ENCODE measurements at regions of chr11 and their contacts with region 1.

Region 1: DNA sequence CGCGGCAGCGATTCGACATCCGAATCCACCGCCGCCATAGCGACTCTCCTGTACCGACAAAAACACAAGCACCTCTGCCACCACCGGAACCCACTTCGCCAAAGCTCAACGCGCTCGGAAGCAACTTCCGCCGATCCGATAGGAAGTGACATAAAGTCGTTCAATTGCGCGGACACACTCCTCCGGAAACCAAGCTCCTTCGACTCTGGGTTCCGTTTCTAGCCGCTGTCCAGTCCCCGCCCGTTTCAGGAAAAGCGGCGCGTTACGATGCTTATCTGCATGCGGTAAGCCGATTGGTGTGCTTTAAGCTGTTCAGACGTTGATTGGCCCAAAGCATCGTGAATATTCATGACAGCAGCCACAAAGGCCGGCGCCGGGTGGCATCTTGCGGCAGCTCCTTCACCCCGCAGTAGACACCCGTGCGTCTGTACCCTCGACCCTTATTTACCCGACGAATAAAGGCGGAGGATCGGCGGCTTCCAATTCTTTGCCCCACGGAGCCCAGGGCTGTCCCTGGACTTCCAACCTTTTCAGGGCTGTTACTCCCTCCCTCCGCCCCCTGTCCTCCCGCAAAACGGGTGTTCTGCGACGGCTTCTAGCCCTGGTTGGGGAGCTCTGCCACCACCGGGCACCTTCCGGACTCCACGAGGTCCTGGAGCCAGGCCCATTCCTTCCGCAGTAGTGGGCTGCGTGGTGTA is at the start of gene TUT1:
- DNase-seq: peak; percentile 97
- H3K4me3 Mint-ChIP-seq: peak within 1 kb of the TSS; percentile 94
- H3K27ac Mint-ChIP-seq: peak within 1 kb of the TSS; percentile 93
- H3K4me1 Mint-ChIP-seq: peaks cover 28% of the 10 kb centered on the region
- H3K27me3 Mint-ChIP-seq: no peaks in the 10 kb centered on the region
- total RNA-seq, gene TUT1: 29.9 and 41.7 TPM in 2 replicates

Region 2: DNA sequence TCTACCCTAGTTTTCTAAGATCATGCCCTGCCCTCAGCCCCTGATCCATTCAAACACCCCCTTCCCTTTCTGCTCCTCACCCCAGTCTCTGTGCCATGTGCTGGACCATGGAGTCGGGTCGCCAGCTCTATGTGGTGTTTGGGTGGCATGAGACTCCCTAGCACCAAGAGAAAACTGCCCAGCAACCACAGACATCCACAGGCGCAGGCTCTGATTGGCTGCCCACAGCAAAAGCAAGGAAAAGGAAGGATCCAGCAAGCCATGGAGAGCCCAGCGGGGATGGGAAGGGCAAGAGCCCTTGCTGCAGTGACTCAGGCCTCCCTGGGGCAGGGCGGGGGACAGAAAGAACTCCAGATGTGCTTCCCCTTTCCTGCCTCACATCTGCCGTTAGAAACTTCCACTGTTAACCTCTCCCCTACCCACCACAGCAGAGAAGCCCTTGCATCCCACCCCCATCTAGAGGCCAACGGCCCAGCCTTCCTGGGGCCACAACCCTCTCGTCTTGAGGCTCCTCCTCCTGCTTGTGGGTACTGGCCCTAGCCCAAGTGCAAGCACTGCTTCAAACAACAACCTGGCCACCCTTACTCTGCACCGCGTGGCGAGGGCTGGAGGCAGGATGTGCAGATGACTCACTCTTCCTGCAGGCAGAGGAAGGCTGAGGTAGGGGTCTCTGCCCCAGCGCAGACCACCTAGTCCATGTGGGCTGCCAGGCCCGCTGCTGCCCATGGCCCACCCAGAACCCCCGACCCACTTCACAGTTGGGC is 35.3 kb before region 1 on chr11:
- intact Hi-C with region 1: loop called (anchors 1 kb)
- DNase-seq: peak; percentile 87
- H3K4me3 Mint-ChIP-seq: peak overlapping the region; percentile 56
- H3K27ac Mint-ChIP-seq: peak overlapping the region; percentile 97
- H3K4me1 Mint-ChIP-seq: peaks cover 84% of the 10 kb centered on the region
- H3K27me3 Mint-ChIP-seq: no peaks in the 10 kb centered on the region

Region 3: DNA sequence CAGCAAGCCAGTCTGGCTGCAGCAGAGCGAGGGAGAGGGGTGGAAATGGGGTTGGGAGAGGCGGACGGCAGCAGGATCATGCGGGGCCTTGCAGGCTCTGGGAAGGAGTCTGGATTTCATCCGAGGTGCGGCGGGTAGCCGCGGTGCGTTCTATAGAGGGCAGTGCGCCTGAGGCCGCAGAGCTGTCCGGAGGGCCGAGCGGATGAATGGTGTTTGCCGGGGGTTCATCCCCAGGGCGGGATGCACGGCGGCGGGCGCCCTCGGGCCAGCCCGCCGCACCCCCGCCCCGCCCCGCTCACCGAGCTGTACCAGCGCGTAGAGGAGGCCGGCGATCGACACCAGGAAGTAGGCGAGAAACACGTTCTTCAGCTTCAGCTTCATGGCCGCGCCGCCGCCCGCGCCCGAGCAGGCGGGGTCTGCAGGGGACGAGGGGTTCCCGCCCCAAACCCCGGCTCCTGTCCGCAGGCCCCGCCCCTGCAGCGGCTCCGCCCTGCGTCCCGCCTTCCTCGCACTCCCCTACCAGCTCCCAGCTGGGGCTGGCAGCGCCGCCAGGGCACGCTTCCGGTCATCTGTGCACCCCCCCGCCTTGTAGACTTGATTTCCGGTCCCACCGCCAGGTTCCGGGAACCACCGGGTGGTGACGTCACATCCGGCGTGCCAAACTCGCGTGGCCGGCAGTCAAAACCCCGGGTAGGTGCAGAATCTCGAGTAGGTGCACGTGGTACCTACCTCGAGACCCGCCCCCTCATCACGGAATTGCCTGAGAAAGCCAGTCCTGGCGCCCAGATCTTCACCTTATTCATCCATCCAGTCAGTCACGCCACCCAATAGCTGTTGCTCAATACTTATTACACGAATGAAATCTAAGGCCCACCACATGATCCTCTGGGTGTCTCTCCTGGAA is 30.2 kb after region 1 on chr11 and contains the start of gene B3GAT3:
- intact Hi-C with region 1: loop called (anchors 1 kb)
- DNase-seq: peak; percentile 94
- H3K4me3 Mint-ChIP-seq: peak within 1 kb of the TSS; percentile 93
- H3K27ac Mint-ChIP-seq: peak within 1 kb of the TSS; percentile 97
- H3K4me1 Mint-ChIP-seq: peaks cover 16% of the 10 kb centered on the region
- H3K27me3 Mint-ChIP-seq: no peaks in the 10 kb centered on the region
- total RNA-seq, gene B3GAT3: 70.0 and 81.4 TPM in 2 replicates

Region 4: DNA sequence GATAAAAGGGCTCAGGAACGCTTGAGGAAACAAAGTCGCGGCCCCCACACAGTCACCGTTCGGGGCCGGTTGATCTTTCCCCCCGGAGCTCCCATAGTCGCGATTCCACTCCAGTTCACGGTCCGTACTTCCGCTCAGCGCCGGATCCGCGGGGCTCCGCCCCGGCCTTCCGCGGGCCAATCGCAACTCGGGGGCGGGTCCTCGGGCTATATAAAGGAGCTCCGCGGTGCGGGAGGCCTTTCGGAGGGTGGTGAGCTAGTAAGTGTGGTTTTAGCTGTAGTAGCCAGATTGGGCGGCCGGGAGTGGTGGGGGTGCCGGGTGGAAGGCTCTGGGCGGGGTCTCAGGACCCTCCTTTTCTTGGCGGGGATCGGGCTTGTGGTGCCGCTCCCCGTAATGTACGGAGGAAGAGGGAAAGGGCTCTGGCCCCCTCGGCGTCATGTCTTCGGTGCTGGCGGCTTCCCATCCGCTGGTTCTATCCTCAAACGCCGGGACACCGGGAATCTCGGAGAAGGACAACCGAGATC is 73.5 kb after region 1 on chr11 and contains the starts of genes C11orf98 and CSKMT:
- intact Hi-C with region 1: loop called (anchors 2 kb)
- DNase-seq: peak; percentile 95
- H3K4me3 Mint-ChIP-seq: peak within 1 kb of the TSS; percentile 97
- H3K27ac Mint-ChIP-seq: peak within 1 kb of the TSS; percentile 78
- H3K4me1 Mint-ChIP-seq: peaks cover 29% of the 10 kb centered on the region
- H3K27me3 Mint-ChIP-seq: no peaks in the 10 kb centered on the region
- total RNA-seq, gene C11orf98: 118 and 130 TPM in 2 replicates
- total RNA-seq, gene CSKMT: 45.4 and 47.2 TPM in 2 replicates

Region 5: DNA sequence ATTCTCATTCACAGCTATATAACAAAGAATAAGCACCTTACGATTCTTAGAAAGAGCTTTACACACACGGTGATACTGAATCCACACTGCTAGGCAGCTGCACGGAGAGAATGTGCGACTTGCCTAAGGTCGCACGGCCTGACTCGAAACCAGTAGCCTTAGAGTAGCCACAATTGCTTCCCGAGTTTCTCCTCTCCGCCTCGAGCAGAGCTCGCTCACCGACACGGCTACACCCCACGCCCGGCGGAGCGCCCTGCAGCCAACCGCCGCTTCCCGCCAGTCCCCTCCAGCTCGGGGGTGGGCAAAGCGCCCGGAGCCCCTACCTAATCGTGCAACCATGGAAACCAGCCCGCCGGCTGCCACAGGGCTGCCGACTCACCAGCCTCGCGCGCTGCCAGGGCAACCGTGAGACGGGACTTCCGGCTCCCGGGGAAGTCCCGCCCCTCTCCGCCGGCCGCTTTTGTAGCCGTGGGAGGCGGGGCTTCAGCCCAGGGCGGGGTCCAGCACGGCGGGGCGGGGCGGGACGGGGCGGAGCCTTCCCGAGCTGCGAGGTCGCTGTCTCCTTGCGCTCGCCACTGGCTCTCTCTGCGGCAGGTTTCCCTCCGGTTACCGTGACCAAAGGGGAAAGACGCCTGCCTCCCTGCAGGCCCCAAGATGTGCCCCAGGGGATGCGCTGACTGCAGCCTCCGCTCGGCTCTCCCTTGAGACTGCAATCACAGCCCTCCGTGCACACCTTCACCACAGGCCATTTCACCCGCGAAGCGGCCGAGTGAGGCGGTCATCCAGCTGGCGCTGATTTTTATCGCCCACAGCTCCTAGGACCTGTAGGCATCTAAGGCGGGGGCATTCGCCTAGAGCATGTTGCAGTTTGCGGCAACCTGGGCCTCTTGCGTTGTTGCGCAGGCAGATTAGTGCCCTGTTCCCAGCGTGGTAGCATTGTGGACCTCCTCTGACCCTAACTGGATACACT is 114.6 kb after region 1 on chr11:
- intact Hi-C with region 1: loop called (anchors 1 kb)
- DNase-seq: peak; percentile 89
- H3K4me3 Mint-ChIP-seq: peak overlapping the region; percentile 90
- H3K27ac Mint-ChIP-seq: peak overlapping the region; percentile 57
- H3K4me1 Mint-ChIP-seq: peaks cover 37% of the 10 kb centered on the region
- H3K27me3 Mint-ChIP-seq: no peaks in the 10 kb centered on the region

Region 6: DNA sequence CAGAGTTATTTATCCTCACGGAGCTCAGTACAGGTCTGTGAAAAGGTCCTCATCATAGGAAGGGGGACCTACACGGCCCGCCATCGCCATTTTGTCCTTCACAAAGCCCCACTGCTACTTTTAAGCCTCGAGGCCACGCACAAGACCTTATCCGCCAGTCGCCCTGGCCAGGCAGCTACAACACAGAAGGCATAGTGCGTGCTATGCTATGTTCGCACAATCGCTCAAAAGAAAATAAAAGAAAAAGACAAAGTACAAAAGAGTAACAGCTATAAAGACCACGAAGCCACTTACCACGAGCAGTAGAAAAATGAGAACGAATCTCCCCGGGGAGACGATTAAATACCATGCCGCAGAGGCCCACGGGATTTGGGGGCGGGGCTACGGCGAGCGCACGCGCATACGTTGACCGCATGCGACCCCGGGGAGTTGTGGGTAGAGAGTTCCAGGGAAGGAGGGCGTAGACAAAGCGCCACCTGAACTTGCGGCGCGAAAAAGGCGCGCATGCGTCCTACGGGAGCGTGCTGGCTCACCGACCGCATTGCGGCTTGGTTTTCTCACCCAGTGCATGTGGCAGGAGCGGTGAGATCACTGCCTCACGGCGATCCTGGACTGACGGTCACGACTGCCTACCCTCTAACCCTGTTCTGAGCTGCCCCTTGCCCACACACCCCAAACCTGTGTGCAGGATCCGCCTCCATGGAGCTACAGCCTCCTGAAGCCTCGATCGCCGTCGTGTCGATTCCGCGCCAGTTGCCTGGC is 264.2 kb after region 1 on chr11:
- intact Hi-C with region 1: loop called (anchors 5 kb)
- DNase-seq: peak; percentile 98
- H3K4me3 Mint-ChIP-seq: peak overlapping the region; percentile 96
- H3K27ac Mint-ChIP-seq: peak overlapping the region; percentile 96
- H3K4me1 Mint-ChIP-seq: peaks cover 45% of the 10 kb centered on the region
- H3K27me3 Mint-ChIP-seq: no peaks in the 10 kb centered on the region

Region 7: GRCh38 chr11:62931499-62932278 is 340.1 kb after region 1 on chr11:
- intact Hi-C with region 1: no loop called
- DNase-seq: no peak
- H3K4me3 Mint-ChIP-seq: no peak overlapping the region
- H3K27ac Mint-ChIP-seq: no peak overlapping the region
- H3K4me1 Mint-ChIP-seq: no peaks in the 10 kb centered on the region
- H3K27me3 Mint-ChIP-seq: peaks cover 44% of the 10 kb centered on the region